ENCODE measurements at regions of chr19 and their contacts with region 1.

Region 1: GRCh38 chr19:6626764-6627163 is 35.8 kb upstream of the CD70 start:
- DNase-seq: no peak
- ATAC-seq: no peak
- H3K4me3 ChIP-seq: no peak overlapping the region
- H3K27ac ChIP-seq: no peak overlapping the region
- H3K4me1 ChIP-seq: no peaks in the 10 kb centered on the region
- H3K27me3 ChIP-seq: peaks cover 0 to 2% (median 0%) of the 10 kb centered on the region in 3 donors
- CTCF ChIP-seq: no peak
- POLR2A ChIP-seq: no peak

Region 2: GRCh38 chr19:6521718-6522646 is 104.8 kb before region 1 on chr19:
- in situ Hi-C with region 1: loop called (anchors 10 kb)
- intact Hi-C with region 1: no loop called
- DNase-seq: no peak
- ATAC-seq: no peak
- H3K4me3 ChIP-seq: no peak overlapping the region
- H3K27ac ChIP-seq: no peak overlapping the region
- H3K4me1 ChIP-seq: peaks cover 0 to under 1% of the 10 kb centered on the region in 2 donors
- H3K27me3 ChIP-seq: no peaks in the 10 kb centered on the region
- CTCF ChIP-seq: no peak
- POLR2A ChIP-seq: no peak